B cell (primary cell): ENCODE measurements at regions of chr12 and their contacts with region 1.

Region 1: GRCh38 chr12:8544295-8544694 is 3.6 kb upstream of the CLEC4E start:
- DNase-seq: peak; percentile 72
- ATAC-seq: peak; percentile 66
- H3K4me3 ChIP-seq: no peak overlapping the region
- H3K4me3 Mint-ChIP-seq: no peak overlapping the region
- H3K27ac ChIP-seq: no peak overlapping the region
- H3K27ac Mint-ChIP-seq: no peak overlapping the region
- H3K4me1 ChIP-seq: no peaks in the 10 kb centered on the region
- H3K4me1 Mint-ChIP-seq: peaks cover 6% of the 10 kb centered on the region
- H3K27me3 ChIP-seq: peaks cover 0 to 7% (median 3%) of the 10 kb centered on the region in 4 experiments
- H3K27me3 Mint-ChIP-seq: peaks cover 23% of the 10 kb centered on the region
- CTCF ChIP-seq: peak; percentile 100

Region 2: GRCh38 chr12:8527250-8528130 is 16.8 kb before region 1 on chr12:
- CTCF ChIA-PET with region 1: interaction called, 13 read pairs
- POLR2A ChIA-PET with region 1: no interaction called
- intact Hi-C with region 1: no loop called
- DNase-seq: no peak
- ATAC-seq: no peak
- H3K4me3 ChIP-seq: no peak overlapping the region
- H3K4me3 Mint-ChIP-seq: no peak overlapping the region
- H3K27ac ChIP-seq: no peak overlapping the region
- H3K27ac Mint-ChIP-seq: no peak overlapping the region
- H3K4me1 ChIP-seq: no peaks in the 10 kb centered on the region
- H3K4me1 Mint-ChIP-seq: peaks cover 2% of the 10 kb centered on the region
- H3K27me3 ChIP-seq: peaks cover 0 to 14% (median 1%) of the 10 kb centered on the region in 4 experiments
- H3K27me3 Mint-ChIP-seq: peaks cover 43% of the 10 kb centered on the region
- CTCF ChIP-seq: no peak

Region 3: DNA sequence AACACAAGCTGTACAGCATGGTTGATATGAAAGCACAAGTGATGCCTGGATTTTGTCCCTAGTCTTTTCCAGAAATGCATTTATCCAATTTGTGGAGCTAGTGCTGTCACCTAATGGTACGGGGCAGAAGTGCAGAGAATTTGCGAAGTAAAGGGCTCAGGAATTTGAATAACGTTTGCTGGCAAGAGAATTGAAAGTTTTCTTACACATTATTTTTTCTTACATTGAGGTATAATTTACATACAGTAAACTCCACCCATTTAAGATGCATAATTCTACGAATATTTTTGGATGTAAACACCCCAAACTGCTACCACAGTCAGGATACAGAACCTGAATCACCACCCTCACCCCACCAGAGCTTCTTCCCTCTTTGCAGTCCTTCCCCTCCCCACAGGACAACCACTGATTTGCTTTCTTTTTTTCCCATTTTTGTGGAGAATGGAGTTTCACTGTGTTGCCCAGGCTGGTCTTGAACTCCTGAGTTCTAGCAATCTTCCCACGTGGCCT is 64.8 kb after region 1 on chr12:
- CTCF ChIA-PET with region 1: interaction called, 30 read pairs
- POLR2A ChIA-PET with region 1: no interaction called
- intact Hi-C with region 1: loop called (anchors 2 kb)
- DNase-seq: peak; percentile 34
- ATAC-seq: peak; percentile 31
- H3K4me3 ChIP-seq: peak overlapping the region in 4 of 5 experiments; percentile 17 to 50 (median 31)
- H3K4me3 Mint-ChIP-seq: peak overlapping the region; percentile 87
- H3K27ac ChIP-seq: peak overlapping the region in 1 of 2 donors; percentile 3
- H3K27ac Mint-ChIP-seq: peak overlapping the region; percentile 12
- H3K4me1 ChIP-seq: peaks cover 13 to 17% of the 10 kb centered on the region in 2 donors
- H3K4me1 Mint-ChIP-seq: peaks cover 27% of the 10 kb centered on the region
- H3K27me3 ChIP-seq: no peaks in the 10 kb centered on the region
- H3K27me3 Mint-ChIP-seq: no peaks in the 10 kb centered on the region
- CTCF ChIP-seq: peak; percentile 50

Region 4: GRCh38 chr12:9039397-9039977 is 495.2 kb after region 1 on chr12:
- CTCF ChIA-PET with region 1: interaction called, 13 read pairs
- POLR2A ChIA-PET with region 1: no interaction called
- intact Hi-C with region 1: no loop called
- DNase-seq: peak; percentile 57
- ATAC-seq: no peak
- H3K4me3 ChIP-seq: no peak overlapping the region
- H3K4me3 Mint-ChIP-seq: no peak overlapping the region
- H3K27ac ChIP-seq: no peak overlapping the region
- H3K27ac Mint-ChIP-seq: no peak overlapping the region
- H3K4me1 ChIP-seq: no peaks in the 10 kb centered on the region
- H3K4me1 Mint-ChIP-seq: no peaks in the 10 kb centered on the region
- H3K27me3 ChIP-seq: no peaks in the 10 kb centered on the region
- H3K27me3 Mint-ChIP-seq: peaks cover 4% of the 10 kb centered on the region
- CTCF ChIP-seq: peak; percentile 93